ENCODE measurements at regions of chr7 and their contacts with region 1.

Region 1: DNA sequence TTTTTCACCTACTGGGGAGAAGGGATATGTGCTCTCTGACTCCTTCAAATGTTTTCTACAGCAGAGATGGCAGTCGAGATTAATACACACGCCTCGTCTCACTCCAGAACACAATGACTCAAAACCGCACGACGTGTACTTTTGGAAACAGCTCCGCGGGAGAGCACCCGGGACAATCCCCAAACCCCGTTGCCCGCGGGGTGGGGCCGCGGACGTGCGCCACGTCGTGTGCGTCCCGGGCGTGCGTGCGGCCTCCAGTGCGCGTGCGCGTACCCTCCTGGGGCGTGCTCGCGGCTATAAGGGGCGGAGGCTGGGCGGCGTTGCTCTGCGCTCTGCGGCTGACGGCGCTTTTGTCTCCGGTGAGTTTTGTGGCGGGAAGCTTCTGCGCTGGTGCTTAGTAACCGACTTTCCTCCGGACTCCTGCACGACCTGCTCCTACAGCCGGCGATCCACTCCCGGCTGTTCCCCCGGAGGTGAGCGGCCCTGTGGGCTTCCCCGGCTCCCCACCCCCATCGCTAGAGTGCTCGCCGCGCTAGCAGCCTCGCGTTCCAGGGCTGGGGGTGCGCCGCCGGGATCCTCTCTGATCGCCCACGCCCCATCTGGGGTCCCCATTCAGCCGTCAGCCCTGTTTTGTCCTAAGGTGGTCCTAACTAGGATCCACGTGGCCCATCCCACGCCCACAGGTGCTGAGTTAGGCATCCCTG is at the start of gene HILPDA:
- DNase-seq: peak; percentile 99
- H3K4me3 Mint-ChIP-seq: peak within 1 kb of the TSS; percentile 90
- H3K27ac Mint-ChIP-seq: peak within 1 kb of the TSS; percentile 100
- H3K4me1 Mint-ChIP-seq: peaks cover 63% of the 10 kb centered on the region
- H3K27me3 Mint-ChIP-seq: peaks cover 6% of the 10 kb centered on the region
- total RNA-seq, gene HILPDA: 171 TPM in 2 replicates

Region 2: GRCh38 chr7:127651556-127652332 is 804.0 kb before region 1 on chr7 and contains the start of gene SND1:
- intact Hi-C with region 1: loop called (anchors 10 kb)
- DNase-seq: peak; percentile 100
- H3K4me3 Mint-ChIP-seq: peak within 1 kb of the TSS; percentile 99
- H3K27ac Mint-ChIP-seq: peak within 1 kb of the TSS; percentile 97
- H3K4me1 Mint-ChIP-seq: peaks cover 31% of the 10 kb centered on the region
- H3K27me3 Mint-ChIP-seq: peaks cover 6% of the 10 kb centered on the region
- total RNA-seq, gene SND1: 275 and 295 TPM in 2 replicates

Region 3: GRCh38 chr7:128343554-128344430 is 111.9 kb before region 1 on chr7 and contains the start of gene RBM28:
- intact Hi-C with region 1: loop called (anchors 5 kb)
- DNase-seq: peak; percentile 96
- H3K4me3 Mint-ChIP-seq: peak within 1 kb of the TSS; percentile 98
- H3K27ac Mint-ChIP-seq: peak within 1 kb of the TSS; percentile 96
- H3K4me1 Mint-ChIP-seq: peaks cover 26% of the 10 kb centered on the region
- H3K27me3 Mint-ChIP-seq: peaks cover 15% of the 10 kb centered on the region
- total RNA-seq, gene RBM28: 76.7 and 85.8 TPM in 2 replicates

Region 4: DNA sequence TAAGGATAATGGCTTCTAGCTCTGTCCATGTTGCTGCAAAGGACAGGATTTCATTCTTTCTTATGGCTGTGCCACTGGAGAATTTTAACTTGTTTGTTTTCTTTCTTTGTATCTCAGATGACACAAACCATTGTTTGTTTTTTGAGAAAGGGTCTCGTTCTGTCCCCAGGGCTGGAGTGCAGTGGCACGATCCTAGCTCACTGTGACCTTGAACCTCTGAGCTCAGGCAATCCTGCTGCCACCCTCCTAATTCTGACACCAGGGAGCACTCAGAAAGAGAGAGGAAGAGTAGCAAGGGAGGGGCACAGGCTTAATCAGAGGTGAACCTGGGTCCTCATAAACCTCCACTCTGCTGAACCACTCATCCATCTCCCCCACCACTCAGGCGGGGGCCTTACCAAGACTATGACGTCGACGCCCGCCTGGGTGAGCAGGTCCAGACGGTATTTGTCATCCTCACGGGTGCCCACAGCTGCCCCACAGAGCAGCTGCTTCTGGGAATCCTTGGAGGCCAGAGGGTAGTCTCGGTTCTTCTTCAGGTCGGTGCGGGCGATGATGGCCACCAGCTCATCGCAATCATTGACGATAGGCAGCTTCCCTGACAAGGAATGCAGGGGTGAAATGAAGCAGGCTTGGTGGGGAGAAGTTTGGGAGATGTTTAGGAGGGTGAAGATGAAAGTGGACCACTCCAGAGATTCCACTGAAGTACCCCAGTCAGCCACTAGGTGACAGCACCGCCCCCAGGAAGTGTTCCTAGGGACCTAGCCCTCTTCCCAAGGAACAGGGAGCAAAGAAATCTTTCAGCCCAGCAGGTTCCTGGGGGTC is 57.5 kb before region 1 on chr7:
- intact Hi-C with region 1: loop called (anchors 2 kb)
- DNase-seq: peak; percentile 81
- H3K4me3 Mint-ChIP-seq: no peak overlapping the region
- H3K27ac Mint-ChIP-seq: no peak overlapping the region
- H3K4me1 Mint-ChIP-seq: no peaks in the 10 kb centered on the region
- H3K27me3 Mint-ChIP-seq: no peaks in the 10 kb centered on the region

Region 5: DNA sequence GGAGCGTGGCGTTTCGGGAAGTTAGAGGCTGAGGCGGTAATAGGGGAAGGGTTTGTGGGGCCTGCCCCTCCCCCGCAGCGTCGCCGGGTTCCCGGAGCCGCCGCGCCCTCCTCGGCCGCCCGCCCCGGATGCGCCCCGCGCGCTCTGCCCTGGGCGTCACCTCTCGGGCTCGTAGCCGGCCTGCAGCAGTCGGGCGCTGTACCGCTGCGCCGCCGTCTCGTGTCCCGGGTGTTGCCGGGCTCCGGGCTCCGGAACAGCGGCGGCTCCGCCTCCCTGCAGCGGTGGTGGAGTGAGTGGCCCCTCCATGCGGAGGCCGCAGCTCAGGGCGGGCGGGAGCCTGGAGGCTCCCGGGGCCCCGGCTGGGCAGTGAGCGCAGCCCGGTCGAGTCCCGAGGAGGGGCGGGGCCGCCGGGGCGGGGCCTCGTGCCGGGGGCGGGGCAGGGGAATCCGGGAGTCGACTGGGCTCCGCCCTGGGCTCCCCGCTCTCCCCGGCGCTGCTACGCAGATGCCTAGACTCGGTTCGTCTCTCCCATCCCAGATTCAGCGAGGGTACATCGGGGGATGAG is 46.0 kb before region 1 on chr7 and contains the start of gene IMPDH1:
- intact Hi-C with region 1: loop called (anchors 1 kb)
- DNase-seq: peak; percentile 96
- H3K4me3 Mint-ChIP-seq: peak within 1 kb of the TSS; percentile 93
- H3K27ac Mint-ChIP-seq: peak within 1 kb of the TSS; percentile 87
- H3K4me1 Mint-ChIP-seq: peaks cover 37% of the 10 kb centered on the region
- H3K27me3 Mint-ChIP-seq: peaks cover 22% of the 10 kb centered on the region
- total RNA-seq, gene IMPDH1: 102 and 105 TPM in 2 replicates

Region 6: DNA sequence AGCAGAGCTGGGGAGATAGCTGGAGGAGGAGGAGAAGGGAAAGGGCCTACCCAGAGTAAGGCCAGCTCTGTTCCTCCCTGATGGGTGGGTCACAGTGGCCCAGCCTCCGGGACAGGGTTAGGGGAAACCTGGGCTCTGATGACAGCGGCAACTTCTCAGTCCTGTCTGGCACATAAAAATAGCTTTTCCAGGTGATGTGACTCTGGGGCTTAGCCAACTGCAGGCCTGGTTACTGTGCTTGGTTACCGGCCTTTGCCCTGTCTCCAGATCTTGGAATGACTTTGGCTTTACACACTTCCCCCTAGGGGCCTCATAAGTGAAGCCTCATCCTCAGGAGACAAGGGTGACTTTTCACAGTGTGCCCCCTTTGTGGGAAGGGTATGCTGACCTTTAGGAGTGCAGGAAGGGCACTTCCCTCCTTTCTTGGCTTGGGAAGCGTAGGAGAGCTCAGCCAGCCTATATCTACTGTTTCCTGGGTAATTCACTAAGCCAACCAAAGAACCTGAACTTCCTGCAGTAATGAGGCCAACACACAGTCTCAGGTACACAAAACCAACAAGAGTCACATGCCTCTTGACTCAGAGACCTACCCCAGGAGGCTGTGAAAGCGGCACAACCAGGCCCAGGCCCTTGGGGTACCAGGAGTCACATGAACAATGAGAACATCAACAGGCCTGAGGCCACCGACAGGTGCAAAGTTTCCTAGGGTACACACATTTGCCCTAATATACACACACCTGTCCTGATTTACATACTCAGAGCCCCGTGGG is 11.7 kb before region 1 on chr7:
- intact Hi-C with region 1: loop called (anchors 2 kb)
- DNase-seq: no peak
- H3K4me3 Mint-ChIP-seq: no peak overlapping the region
- H3K27ac Mint-ChIP-seq: no peak overlapping the region
- H3K4me1 Mint-ChIP-seq: peaks cover 20% of the 10 kb centered on the region
- H3K27me3 Mint-ChIP-seq: no peaks in the 10 kb centered on the region